Panc1 (cell line): ENCODE measurements at regions of chrX and their contacts with region 1.

Region 1: GRCh38 chrX:103464774-103465117 is 54.5 kb downstream of the RAB40A start:
- DNase-seq: peak; percentile 75
- ATAC-seq: peak; percentile 93
- H3K4me3 ChIP-seq: peak overlapping the region; percentile 28 to 48
- H3K27ac ChIP-seq: no peak overlapping the region
- H3K4me1 ChIP-seq: no peaks in the 10 kb centered on the region
- H3K27me3 ChIP-seq: peaks cover 4% of the 10 kb centered on the region; the same call in 1 of the 2 replicates
- CTCF ChIP-seq: peak; percentile 81

Region 2: DNA sequence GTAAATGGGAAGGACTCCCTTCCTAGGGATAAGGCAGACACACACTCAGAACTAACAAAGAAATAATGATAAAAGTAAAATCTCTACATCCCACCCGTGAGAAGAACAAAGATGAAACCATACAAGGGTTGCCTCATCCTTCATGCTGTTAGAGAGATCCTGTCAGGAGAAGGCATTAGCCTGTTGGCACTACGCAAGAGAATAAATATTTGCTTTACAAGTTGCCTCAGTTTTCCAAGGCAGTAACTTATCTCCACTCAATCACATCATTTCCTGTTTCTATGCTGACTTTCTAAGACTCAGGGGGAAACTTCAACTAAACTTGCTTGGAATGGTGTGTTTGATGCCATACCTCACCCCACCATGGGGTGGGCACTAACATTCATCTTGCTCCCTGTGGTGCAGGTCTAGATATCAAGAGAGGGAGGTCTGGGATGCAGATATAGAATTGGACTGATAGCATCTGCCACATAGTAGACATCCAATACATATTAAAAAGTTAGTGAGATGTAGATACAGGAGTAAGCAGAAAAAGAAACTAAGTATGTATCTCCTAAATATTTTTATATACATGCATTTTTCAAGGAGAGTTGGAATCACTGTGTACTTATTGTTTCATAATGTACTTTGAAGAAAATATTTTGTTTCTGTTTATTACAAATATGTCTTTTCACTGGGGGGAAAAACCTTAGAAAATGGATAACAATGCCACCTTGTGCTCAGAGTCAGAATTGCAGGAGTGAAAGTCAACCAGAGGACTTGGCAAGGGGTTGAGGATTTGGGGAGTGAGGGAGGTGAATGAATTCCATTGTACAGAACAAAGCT is 307.0 kb before region 1 on chrX:
- CTCF ChIA-PET with region 1: no interaction called
- POLR2A ChIA-PET with region 1: no interaction called
- in situ Hi-C with region 1: no loop called
- intact Hi-C with region 1: no loop called
- DNase-seq: peak; percentile 46
- ATAC-seq: peak; percentile 84
- H3K4me3 ChIP-seq: no peak overlapping the region
- H3K27ac ChIP-seq: no peak overlapping the region; the same call in 1 of the 2 replicates
- H3K4me1 ChIP-seq: peaks cover 7% of the 10 kb centered on the region
- H3K27me3 ChIP-seq: no peaks in the 10 kb centered on the region
- CTCF ChIP-seq: peak; percentile 80

Region 3: DNA sequence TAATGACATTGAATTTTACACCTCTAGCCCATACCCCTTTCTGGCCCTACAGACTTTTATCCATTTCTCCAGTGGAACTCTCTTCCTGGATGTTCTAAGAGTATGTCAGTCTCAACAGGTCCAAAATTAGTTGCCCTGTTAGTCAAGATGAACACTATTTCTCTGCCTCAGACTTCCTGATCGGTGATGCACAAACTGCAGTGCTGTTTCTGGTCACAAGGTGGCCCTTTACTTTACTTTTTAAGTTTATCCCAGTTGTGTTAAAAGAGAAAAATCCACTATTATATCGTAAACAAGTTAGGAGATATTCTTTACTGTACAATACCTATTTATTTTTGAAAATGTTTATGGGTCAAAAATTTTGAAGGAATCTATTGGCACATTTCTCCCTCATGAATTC is 121.6 kb before region 1 on chrX:
- CTCF ChIA-PET with region 1: interaction called, 5 read pairs
- POLR2A ChIA-PET with region 1: no interaction called
- in situ Hi-C with region 1: no loop called
- intact Hi-C with region 1: loop called (anchors 1 kb)
- DNase-seq: peak; percentile 47
- ATAC-seq: peak; percentile 83
- H3K4me3 ChIP-seq: no peak overlapping the region
- H3K27ac ChIP-seq: no peak overlapping the region
- H3K4me1 ChIP-seq: no peaks in the 10 kb centered on the region
- H3K27me3 ChIP-seq: 0 out of 2 replicates have a peak, but pooled peaks cover 2% of the 10 kb centered on the region
- CTCF ChIP-seq: peak; percentile 78